ENCODE measurements at regions of chr20 and their contacts with region 1.

Region 1: GRCh38 chr20:2172305-2173175 is 70.9 kb downstream of the STK35 start:
- DNase-seq: peak; percentile 87
- H3K4me3 ChIP-seq: no peak overlapping the region
- H3K27ac ChIP-seq: no peak overlapping the region
- H3K4me1 ChIP-seq: peaks cover 0 to 4% (median 2%) of the 10 kb centered on the region in 4 donors
- H3K27me3 ChIP-seq: peaks cover 0 to 5% (median 0%) of the 10 kb centered on the region in 3 donors
- CTCF ChIP-seq: peak; percentile 90 to 92 (median 91)
- EP300 ChIP-seq: no peak
- POLR2A ChIP-seq: no peak

Region 2: GRCh38 chr20:1764136-1765033 is 408.2 kb before region 1 on chr20:
- intact Hi-C with region 1: loop called (anchors 2 kb)
- DNase-seq: peak; percentile 80
- H3K4me3 ChIP-seq: no peak overlapping the region
- H3K27ac ChIP-seq: no peak overlapping the region
- H3K4me1 ChIP-seq: peaks cover 0 to 7% (median 3%) of the 10 kb centered on the region in 4 donors
- H3K27me3 ChIP-seq: no peaks in the 10 kb centered on the region
- CTCF ChIP-seq: peak; percentile 41 to 73 (median 56)
- EP300 ChIP-seq: no peak
- POLR2A ChIP-seq: no peak

Region 3: DNA sequence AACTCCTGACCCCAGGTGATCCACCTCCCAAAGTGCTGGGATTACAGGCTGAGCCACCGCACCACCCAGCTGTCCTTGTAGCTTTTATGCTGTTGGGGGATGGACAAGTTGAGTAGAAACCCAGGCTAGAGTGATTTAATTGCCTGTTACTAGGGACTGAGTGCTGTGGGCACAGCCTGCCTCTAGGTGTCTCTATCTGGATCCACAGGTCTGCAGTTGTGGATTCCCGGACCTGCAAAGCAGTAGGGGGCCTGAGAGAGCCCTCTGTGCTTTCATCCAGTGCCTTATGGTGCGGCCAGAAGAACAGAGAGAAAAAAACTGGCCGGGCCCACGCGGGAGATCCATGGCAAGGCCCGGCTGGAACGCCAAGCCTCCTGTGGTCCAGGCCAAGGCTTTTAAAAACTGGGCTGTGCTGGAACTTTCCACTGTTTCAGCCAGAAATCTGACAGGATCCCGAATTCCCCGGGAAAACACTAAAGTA is 272.2 kb before region 1 on chr20:
- intact Hi-C with region 1: loop called (anchors 5 kb)
- DNase-seq: peak; percentile 89
- H3K4me3 ChIP-seq: no peak overlapping the region
- H3K27ac ChIP-seq: peak overlapping the region; percentile 17 to 94 (median 48)
- H3K4me1 ChIP-seq: peaks cover 0 to 59% (median 55%) of the 10 kb centered on the region in 4 donors
- H3K27me3 ChIP-seq: no peaks in the 10 kb centered on the region
- CTCF ChIP-seq: peak in 3 of 4 experiments; percentile 19 to 60 (median 44)
- EP300 ChIP-seq: no peak
- POLR2A ChIP-seq: no peak

Region 4: DNA sequence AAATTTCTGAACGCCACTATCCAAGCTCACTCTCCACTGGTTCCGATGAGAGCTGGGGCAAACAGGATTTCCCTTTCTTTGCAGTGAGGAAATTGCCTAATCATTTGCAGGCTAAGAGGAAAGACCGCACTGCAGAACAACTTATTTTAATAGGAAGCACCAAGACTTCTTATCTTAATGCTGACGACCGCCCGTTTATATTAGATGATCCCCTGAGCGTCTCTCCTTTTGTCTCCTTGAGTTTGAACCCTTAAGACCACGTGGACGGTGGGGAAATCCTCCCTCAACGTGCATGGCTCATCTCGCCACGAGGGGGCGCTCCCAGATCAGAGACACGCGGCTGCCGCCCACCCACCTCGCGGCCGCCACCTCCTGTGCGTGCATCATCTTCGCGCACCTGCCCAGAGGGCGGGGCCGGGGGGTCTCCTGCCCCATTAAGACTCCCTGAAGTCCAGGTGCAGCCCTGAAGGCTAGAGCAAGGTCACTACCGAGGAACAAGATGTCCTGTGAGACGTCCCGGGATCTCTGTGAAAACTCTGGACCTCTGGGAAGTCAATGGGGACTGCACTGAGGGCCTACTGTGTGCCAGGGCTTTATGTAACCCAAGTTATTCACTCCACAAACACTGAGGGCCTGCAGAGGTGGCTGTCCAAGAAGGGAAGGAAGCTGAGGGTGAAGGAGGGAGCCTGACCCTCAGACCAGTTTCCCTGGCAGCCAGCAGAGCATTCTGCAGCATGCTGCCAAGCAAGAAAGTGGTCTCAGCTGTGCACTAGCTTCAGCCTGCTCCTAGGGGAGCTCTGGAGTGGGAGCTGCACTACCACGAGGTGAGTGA is 206.8 kb before region 1 on chr20:
- intact Hi-C with region 1: loop called (anchors 1 kb)
- DNase-seq: peak; percentile 86
- H3K4me3 ChIP-seq: peak overlapping the region in 1 of 4 donors; percentile 9
- H3K27ac ChIP-seq: no peak overlapping the region
- H3K4me1 ChIP-seq: peaks cover 0 to 9% (median 8%) of the 10 kb centered on the region in 4 donors
- H3K27me3 ChIP-seq: peaks cover 0 to 2% (median 0%) of the 10 kb centered on the region in 3 donors
- CTCF ChIP-seq: peak; percentile 81 to 93 (median 92)
- EP300 ChIP-seq: no peak
- POLR2A ChIP-seq: no peak

Region 5: DNA sequence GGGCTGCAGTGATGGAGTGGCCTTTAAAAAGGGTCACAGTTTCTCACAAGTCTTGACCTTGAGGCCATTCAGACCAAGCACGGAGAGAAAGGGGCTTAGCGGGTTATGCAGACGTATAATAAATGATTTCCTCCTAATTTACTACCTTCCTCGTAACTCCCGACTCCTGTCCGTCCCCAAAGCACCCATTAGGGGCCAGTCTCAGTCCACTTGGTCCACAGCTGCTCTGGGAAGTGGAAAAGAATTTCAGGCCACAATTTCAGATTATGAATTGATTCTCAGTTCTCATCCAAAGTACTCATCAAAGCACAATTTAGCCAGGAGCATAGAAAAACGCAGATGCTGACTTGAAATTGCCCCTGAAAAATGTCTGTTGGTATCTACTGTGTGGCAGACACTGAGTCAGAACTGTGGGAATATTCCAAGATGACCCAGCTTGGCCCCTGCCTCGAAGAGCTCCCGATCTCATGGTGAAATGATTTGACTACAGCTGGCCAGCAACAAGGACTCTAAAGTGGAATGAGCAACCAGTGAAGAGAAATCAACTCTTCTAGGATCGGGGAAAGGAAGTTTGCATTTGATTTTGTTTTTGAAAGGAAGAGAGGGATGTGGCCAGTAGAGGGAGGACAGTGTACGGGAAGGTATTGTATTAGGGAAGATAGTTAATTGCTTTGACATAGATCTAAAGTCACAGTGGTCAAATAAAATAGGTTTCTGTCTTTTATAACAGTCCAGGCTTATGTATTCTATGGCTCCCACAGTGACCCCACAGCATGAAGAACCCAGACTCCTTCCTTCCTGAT is 86.2 kb before region 1 on chr20:
- intact Hi-C with region 1: loop called (anchors 5 kb)
- DNase-seq: no peak
- H3K4me3 ChIP-seq: no peak overlapping the region
- H3K27ac ChIP-seq: no peak overlapping the region
- H3K4me1 ChIP-seq: no peaks in the 10 kb centered on the region
- H3K27me3 ChIP-seq: peaks cover 0 to 19% (median 0%) of the 10 kb centered on the region in 3 donors
- CTCF ChIP-seq: peak in 3 of 4 experiments; percentile 2 to 14 (median 12)
- EP300 ChIP-seq: no peak
- POLR2A ChIP-seq: no peak

Region 6: GRCh38 chr20:2261105-2261504 is 88.6 kb after region 1 on chr20:
- intact Hi-C with region 1: no loop called
- DNase-seq: no peak
- H3K4me3 ChIP-seq: no peak overlapping the region
- H3K27ac ChIP-seq: no peak overlapping the region
- H3K4me1 ChIP-seq: no peaks in the 10 kb centered on the region
- H3K27me3 ChIP-seq: no peaks in the 10 kb centered on the region
- CTCF ChIP-seq: no peak
- EP300 ChIP-seq: no peak
- POLR2A ChIP-seq: no peak

Region 7: DNA sequence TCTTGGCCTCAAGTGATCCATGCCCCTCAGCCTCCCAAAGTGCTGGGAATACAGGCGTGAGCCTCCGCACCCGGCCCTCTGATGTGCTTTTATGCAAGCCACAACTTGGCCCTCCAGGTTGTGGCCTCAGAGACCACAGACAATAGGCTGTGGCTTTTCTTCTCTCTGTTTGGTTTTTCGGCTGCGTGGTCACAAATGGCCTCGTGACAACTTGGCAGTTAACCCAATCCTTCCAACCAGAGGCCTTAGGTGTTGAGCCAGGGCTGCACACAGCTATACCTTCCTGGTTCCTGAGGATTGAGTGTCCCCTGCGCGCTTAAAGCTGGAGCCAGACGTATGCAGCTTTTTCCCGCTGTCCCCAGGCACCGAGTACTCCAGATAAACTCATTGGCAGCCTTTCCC is 116.9 kb after region 1 on chr20:
- intact Hi-C with region 1: no loop called
- DNase-seq: no peak
- H3K4me3 ChIP-seq: no peak overlapping the region
- H3K27ac ChIP-seq: peak overlapping the region in 1 of 4 donors; percentile 14
- H3K4me1 ChIP-seq: no peaks in the 10 kb centered on the region
- H3K27me3 ChIP-seq: peaks cover 0 to 11% (median 0%) of the 10 kb centered on the region in 3 donors
- CTCF ChIP-seq: no peak
- EP300 ChIP-seq: no peak
- POLR2A ChIP-seq: no peak